H1 (cell line): ENCODE measurements at regions of chr15 and their contacts with region 1.

Region 1: GRCh38 chr15:39874890-39875549 is 45.0 kb downstream of the GPR176 start:
- DNase-seq: no peak
- H3K4me3 ChIP-seq: no peak overlapping the region
- H3K27ac ChIP-seq: no peak overlapping the region
- H3K4me1 ChIP-seq: peaks cover 0 to 9% (median 2%) of the 10 kb centered on the region in 4 experiments; a peak in 5 of 7 replicates
- H3K27me3 ChIP-seq: no peaks in the 10 kb centered on the region
- CTCF ChIP-seq: peak in 2 of 3 experiments; percentile 45 to 56; a peak in 2 of 4 replicates
- EP300 ChIP-seq: no peak
- POLR2A ChIP-seq: no peak
- RAD21 ChIP-seq: peak; percentile 61 to 70

Region 2: GRCh38 chr15:39747326-39747725 is 127.7 kb before region 1 on chr15:
- CTCF ChIA-PET with region 1: no interaction called
- POLR2A ChIA-PET with region 1: no interaction called
- DNase-seq: no peak
- H3K4me3 ChIP-seq: no peak overlapping the region
- H3K27ac ChIP-seq: no peak overlapping the region
- H3K4me1 ChIP-seq: no peaks in the 10 kb centered on the region
- H3K27me3 ChIP-seq: no peaks in the 10 kb centered on the region
- CTCF ChIP-seq: no peak
- EP300 ChIP-seq: no peak
- POLR2A ChIP-seq: no peak
- RAD21 ChIP-seq: no peak

Region 3: DNA sequence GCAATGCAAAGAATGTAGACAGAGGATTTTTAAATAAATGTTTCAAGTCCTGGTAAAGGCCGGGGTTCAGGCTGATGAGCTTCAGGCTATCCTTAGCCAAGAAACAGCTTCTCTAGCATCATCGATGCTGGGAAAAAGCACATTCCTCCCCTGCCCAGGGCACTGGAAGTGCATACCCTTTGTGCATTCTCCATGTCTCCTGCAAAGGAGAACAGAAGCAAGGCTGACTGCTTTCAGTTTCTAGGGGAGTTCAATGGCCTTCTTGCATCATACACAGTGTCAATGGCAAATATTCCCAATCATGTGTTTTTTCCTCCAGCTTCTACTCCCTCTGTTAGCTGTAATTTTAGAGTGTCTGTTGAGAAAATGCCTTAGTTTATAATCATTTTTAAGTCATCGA is 14.8 kb before region 1 on chr15:
- CTCF ChIA-PET with region 1: interaction called, 34 read pairs
- POLR2A ChIA-PET with region 1: interaction called, 3 read pairs
- DNase-seq: no peak
- H3K4me3 ChIP-seq: no peak overlapping the region
- H3K27ac ChIP-seq: no peak overlapping the region
- H3K4me1 ChIP-seq: peaks cover 0 to 12% (median 4%) of the 10 kb centered on the region in 4 experiments; a peak in 4 of 7 replicates
- H3K27me3 ChIP-seq: no peaks in the 10 kb centered on the region
- CTCF ChIP-seq: no peak
- EP300 ChIP-seq: no peak
- POLR2A ChIP-seq: no peak
- RAD21 ChIP-seq: no peak